Heart left ventricle (tissue), 16 donors: ENCODE measurements at regions of chr16 and their contacts with region 1.

Region 1: DNA sequence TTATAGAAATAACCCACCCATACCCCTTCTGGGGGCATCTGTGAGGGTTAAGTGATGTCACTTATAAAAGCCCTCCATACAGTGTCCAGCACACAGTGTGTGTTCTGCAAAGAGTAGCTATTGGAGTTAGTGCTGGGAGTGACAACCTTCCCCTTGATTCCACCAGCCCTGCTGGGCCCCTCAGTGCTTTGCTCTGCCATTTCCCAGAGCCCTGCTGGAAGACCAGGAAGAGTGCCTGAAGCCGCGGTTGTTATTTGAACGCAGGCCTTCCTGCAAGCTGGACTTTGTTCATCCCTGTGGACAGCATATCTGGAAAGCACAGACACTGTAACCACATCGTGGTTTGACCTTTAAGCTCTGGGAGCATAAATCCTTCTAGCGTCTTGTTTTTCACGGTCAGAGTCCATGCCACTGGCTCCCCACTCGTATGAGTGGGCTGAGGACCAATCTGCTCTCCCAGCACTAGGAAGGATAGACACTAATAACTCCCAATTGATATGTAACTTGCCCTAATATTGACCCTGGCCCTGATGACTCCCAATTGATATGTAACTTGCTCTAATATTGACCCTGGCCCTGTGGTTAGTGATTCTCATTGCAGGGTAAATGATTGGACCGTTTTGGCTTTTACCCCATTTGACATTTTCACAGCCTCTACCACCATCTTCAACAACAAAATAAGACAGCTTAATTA is 297.1 kb upstream of the MAF start:
- DNase-seq: peak in 1 of 5 donors; percentile 11
- ATAC-seq: peak in 3 of 4 donors; percentile 28 to 78 (median 64)
- H3K4me3 ChIP-seq: no peak overlapping the region
- H3K27ac ChIP-seq: no peak overlapping the region
- H3K4me1 ChIP-seq: peaks cover 0 to 10% (median 0%) of the 10 kb centered on the region in 12 donors
- H3K27me3 ChIP-seq: no peaks in the 10 kb centered on the region
- CTCF ChIP-seq: no peak
- POLR2A ChIP-seq: no peak

Region 2: GRCh38 chr16:79628501-79628975 is 269.1 kb before region 1 on chr16:
- intact Hi-C with region 1: no loop called
- DNase-seq: no peak
- ATAC-seq: no peak
- H3K4me3 ChIP-seq: no peak overlapping the region
- H3K27ac ChIP-seq: no peak overlapping the region
- H3K4me1 ChIP-seq: no peaks in the 10 kb centered on the region
- H3K27me3 ChIP-seq: peaks cover 0 to 6% (median 0%) of the 10 kb centered on the region in 9 donors
- CTCF ChIP-seq: no peak
- POLR2A ChIP-seq: no peak

Region 3: DNA sequence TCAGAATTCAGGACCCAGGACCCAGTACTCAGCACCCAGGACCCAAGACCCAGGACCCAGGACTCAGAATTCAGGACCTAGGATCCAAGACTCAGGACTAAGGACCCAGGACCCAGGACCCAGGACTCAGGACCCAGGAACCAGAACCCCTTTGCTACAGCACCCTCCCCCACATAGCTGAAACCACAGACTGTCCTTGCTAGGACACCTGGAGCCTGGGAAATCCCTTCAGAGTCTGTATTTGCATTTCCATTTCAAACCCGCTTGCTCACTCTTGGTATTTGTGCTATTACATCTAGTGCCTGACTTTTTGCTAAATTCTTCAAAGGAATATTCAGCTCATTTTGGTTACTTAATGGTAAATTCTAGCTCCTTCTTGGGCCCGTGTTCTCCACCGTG is 21.3 kb before region 1 on chr16:
- intact Hi-C with region 1: loop called in 1 of 10 experiments (anchors 2 kb)
- DNase-seq: no peak
- ATAC-seq: no peak
- H3K4me3 ChIP-seq: no peak overlapping the region
- H3K27ac ChIP-seq: no peak overlapping the region
- H3K4me1 ChIP-seq: no peaks in the 10 kb centered on the region
- H3K27me3 ChIP-seq: no peaks in the 10 kb centered on the region
- CTCF ChIP-seq: no peak
- POLR2A ChIP-seq: no peak

Region 4: DNA sequence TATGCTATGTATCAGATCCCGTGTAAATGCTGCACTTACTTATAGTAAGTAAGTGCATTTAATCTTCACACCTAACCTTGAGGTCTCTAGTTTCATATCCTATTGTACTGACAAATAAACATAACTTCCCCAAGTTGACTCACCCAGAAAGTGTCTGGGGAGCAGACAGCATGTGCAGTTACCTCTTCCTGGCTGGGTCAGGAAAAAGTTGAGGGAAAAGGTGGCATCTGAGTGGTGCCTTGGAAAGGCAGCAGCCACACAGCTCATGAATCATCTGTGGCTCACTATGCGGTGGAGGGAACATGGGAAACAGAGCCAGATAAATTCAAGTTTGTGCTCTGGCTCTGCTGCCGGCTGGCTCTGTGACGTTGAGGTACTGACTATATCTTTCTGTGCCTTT is 261.2 kb after region 1 on chr16:
- intact Hi-C with region 1: no loop called
- DNase-seq: no peak
- ATAC-seq: no peak
- H3K4me3 ChIP-seq: no peak overlapping the region
- H3K27ac ChIP-seq: no peak overlapping the region
- H3K4me1 ChIP-seq: no peaks in the 10 kb centered on the region
- H3K27me3 ChIP-seq: no peaks in the 10 kb centered on the region
- CTCF ChIP-seq: no peak
- POLR2A ChIP-seq: no peak